Gastrocnemius medialis (tissue), 4 donors: ENCODE measurements at regions of chr19 and their contacts with region 1.

Region 1: GRCh38 chr19:44113138-44113783 is at the start of gene ZNF225:
- DNase-seq: peak; percentile 97 to 98
- ATAC-seq: peak; percentile 100
- H3K4me3 ChIP-seq: peak within 1 kb of the TSS; percentile 67 to 92 (median 86)
- H3K27ac ChIP-seq: peak within 1 kb of the TSS; percentile 73 to 86 (median 84)
- H3K4me1 ChIP-seq: peaks cover 14 to 18% of the 10 kb centered on the region in 2 donors
- H3K27me3 ChIP-seq: no peaks in the 10 kb centered on the region
- CTCF ChIP-seq: peak in 1 of 5 experiments; percentile 21
- POLR2A ChIP-seq: peak in 1 of 2 donors; percentile 17
- total RNA-seq, gene ZNF225: 0.75 to 1.4 (median 1.1) TPM

Region 2: GRCh38 chr19:43798546-43799409 is 314.5 kb before region 1 on chr19:
- in situ Hi-C with region 1: no loop called
- intact Hi-C with region 1: no loop called
- DNase-seq: no peak
- ATAC-seq: no peak
- H3K4me3 ChIP-seq: peak overlapping the region in 3 of 4 donors; percentile 38 to 45 (median 40)
- H3K27ac ChIP-seq: no peak overlapping the region
- H3K4me1 ChIP-seq: no peaks in the 10 kb centered on the region
- H3K27me3 ChIP-seq: peaks cover 0 to 25% (median 21%) of the 10 kb centered on the region in 3 donors
- CTCF ChIP-seq: no peak
- POLR2A ChIP-seq: no peak

Region 3: DNA sequence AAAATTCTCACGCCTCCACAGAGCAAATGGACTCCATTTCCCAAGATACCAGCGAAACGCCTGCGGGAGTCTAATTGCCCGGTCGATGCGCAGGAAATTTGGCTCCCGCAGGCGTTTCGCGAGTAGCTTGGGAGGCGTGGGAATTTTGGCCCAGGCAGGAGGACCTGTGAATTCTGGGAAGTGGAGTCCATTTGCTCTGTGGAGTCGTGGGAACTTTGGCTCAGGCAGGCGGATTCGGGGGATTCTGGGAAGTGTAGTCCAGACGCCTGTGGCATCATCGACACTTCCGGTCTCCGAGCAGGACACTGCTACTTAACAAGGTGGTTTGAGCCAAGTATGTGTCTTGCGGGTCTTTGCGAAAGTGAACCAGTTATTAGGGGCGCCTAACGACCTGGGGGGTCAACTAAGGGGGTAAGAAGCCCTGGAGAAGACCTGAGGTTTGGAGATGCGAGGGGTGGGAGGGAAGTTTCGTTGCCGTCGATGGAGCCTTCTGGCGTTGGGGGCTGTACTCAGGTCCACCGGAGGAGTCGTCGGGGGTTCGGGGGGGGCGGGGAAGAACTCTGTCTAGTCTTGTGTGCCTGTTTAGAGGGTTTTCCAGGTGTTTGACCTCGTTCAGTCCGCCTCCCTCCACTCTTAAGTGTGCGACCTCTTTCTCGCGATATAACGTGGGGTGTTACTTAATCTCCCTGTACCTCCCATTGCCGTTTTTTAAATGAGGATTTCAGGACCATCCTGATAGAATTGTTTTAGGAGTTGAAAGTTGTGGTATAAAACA is 129.2 kb before region 1 on chr19 and contains the start of gene ZNF155:
- in situ Hi-C with region 1: no loop called
- intact Hi-C with region 1: loop called (anchors 1 kb)
- DNase-seq: peak; percentile 90 to 94
- ATAC-seq: peak; percentile 100
- H3K4me3 ChIP-seq: peak within 1 kb of the TSS; percentile 63 to 85 (median 76)
- H3K27ac ChIP-seq: peak within 1 kb of the TSS; percentile 77 to 83 (median 80)
- H3K4me1 ChIP-seq: peaks cover 0 to 5% of the 10 kb centered on the region in 2 donors
- H3K27me3 ChIP-seq: no peaks in the 10 kb centered on the region
- CTCF ChIP-seq: no peak
- POLR2A ChIP-seq: no peak
- total RNA-seq, gene ZNF155: 0.97 to 2.0 (median 1.6) TPM

Region 4: GRCh38 chr19:44093931-44094765 is 19.1 kb before region 1 on chr19 and contains the start of gene ZNF224:
- in situ Hi-C with region 1: no loop called
- intact Hi-C with region 1: loop called (anchors 1 kb)
- DNase-seq: peak; percentile 85 to 87
- ATAC-seq: peak; percentile 100
- H3K4me3 ChIP-seq: peak within 1 kb of the TSS; percentile 76 to 91 (median 80)
- H3K27ac ChIP-seq: peak within 1 kb of the TSS; percentile 70 to 82 (median 73)
- H3K4me1 ChIP-seq: peaks cover 7 to 10% of the 10 kb centered on the region in 2 donors
- H3K27me3 ChIP-seq: no peaks in the 10 kb centered on the region
- CTCF ChIP-seq: no peak
- POLR2A ChIP-seq: peak in 1 of 2 donors; percentile 41
- total RNA-seq, gene ZNF224: 4.9 to 14.1 (median 6.9) TPM

Region 5: GRCh38 chr19:44164673-44165512 is 51.6 kb after region 1 on chr19 and contains the start of gene ZNF226:
- in situ Hi-C with region 1: no loop called
- intact Hi-C with region 1: loop called (anchors 1 kb)
- DNase-seq: peak; percentile 94
- ATAC-seq: peak; percentile 100
- H3K4me3 ChIP-seq: peak within 1 kb of the TSS; percentile 86 to 95 (median 88)
- H3K27ac ChIP-seq: peak within 1 kb of the TSS; percentile 79 to 86 (median 84)
- H3K4me1 ChIP-seq: peaks cover 7 to 13% of the 10 kb centered on the region in 2 donors
- H3K27me3 ChIP-seq: no peaks in the 10 kb centered on the region
- CTCF ChIP-seq: no peak
- POLR2A ChIP-seq: peak in 1 of 2 donors; percentile 53
- total RNA-seq, gene ZNF226: 3.2 to 6.9 (median 3.8) TPM

Region 6: DNA sequence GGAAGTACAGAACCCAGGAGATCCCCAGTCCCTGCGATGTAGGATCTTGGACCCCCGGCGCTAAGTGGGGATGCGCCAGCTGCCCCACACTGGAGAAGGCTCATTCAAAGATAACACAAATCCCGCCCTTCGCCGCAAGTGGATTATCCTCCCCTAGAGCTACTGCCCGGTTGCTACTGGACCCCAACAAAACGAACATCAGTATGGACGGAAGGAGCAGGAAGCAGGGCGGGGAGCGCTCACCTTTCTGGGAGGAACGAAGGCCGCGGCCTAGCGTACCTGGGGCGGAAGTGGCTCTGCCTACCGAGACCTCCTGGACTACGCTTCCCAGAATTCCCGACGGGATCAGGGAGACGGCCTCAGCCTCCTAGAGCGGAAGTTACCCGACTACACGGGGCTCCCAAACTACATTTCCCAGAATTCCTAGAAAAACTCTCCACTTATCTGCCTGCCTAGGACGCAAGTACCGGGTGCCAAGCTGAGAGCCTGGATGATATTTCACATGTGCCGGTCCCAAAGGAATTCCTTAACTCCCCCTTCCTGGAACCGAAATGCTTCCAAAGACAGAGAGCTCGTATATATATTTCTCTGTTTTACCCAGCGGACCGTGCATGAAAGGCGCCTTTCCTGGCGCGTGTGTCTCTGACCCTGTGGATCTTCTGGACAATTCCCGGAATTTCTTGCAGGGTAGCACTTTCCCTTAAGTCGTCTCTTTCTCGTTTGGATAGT is 243.3 kb after region 1 on chr19 and contains the start of gene ZNF112:
- in situ Hi-C with region 1: no loop called
- intact Hi-C with region 1: loop called (anchors 5 kb)
- DNase-seq: peak; percentile 85 to 88
- ATAC-seq: peak; percentile 100
- H3K4me3 ChIP-seq: peak within 1 kb of the TSS; percentile 51 to 74 (median 65)
- H3K27ac ChIP-seq: peak within 1 kb of the TSS; percentile 46 to 68 (median 58)
- H3K4me1 ChIP-seq: peaks cover 8 to 9% of the 10 kb centered on the region in 2 donors
- H3K27me3 ChIP-seq: no peaks in the 10 kb centered on the region
- CTCF ChIP-seq: no peak
- POLR2A ChIP-seq: no peak
- total RNA-seq, gene ZNF112: 0.78 to 4.0 (median 1.6) TPM